ENCODE measurements at regions of chr1 and their contacts with region 1.

Region 1: GRCh38 chr1:151340870-151341754 is 5.9 kb downstream of the RFX5 start:
- DNase-seq: peak; percentile 69
- H3K4me3 Mint-ChIP-seq: no peak overlapping the region
- H3K27ac Mint-ChIP-seq: peak overlapping the region; percentile 23
- H3K4me1 Mint-ChIP-seq: peaks cover 26% of the 10 kb centered on the region
- H3K27me3 Mint-ChIP-seq: no peaks in the 10 kb centered on the region

Region 2: GRCh38 chr1:151130987-151131586 is 210.0 kb before region 1 on chr1:
- CTCF ChIA-PET with region 1: no interaction called
- intact Hi-C with region 1: no loop called
- DNase-seq: peak; percentile 93
- H3K4me3 Mint-ChIP-seq: peak overlapping the region; percentile 75
- H3K27ac Mint-ChIP-seq: peak overlapping the region; percentile 70
- H3K4me1 Mint-ChIP-seq: peaks cover 8% of the 10 kb centered on the region
- H3K27me3 Mint-ChIP-seq: no peaks in the 10 kb centered on the region

Region 3: GRCh38 chr1:151292207-151293030 is 48.7 kb before region 1 on chr1:
- CTCF ChIA-PET with region 1: interaction called, 59 read pairs
- intact Hi-C with region 1: no loop called
- DNase-seq: no peak
- H3K4me3 Mint-ChIP-seq: no peak overlapping the region
- H3K27ac Mint-ChIP-seq: peak overlapping the region; percentile 46
- H3K4me1 Mint-ChIP-seq: peaks cover 13% of the 10 kb centered on the region
- H3K27me3 Mint-ChIP-seq: no peaks in the 10 kb centered on the region

Region 4: GRCh38 chr1:151311589-151312331 is 29.4 kb before region 1 on chr1:
- CTCF ChIA-PET with region 1: interaction called, 68 read pairs
- intact Hi-C with region 1: no loop called
- DNase-seq: peak; percentile 94
- H3K4me3 Mint-ChIP-seq: no peak overlapping the region
- H3K27ac Mint-ChIP-seq: peak overlapping the region; percentile 92
- H3K4me1 Mint-ChIP-seq: peaks cover 37% of the 10 kb centered on the region
- H3K27me3 Mint-ChIP-seq: no peaks in the 10 kb centered on the region

Region 5: DNA sequence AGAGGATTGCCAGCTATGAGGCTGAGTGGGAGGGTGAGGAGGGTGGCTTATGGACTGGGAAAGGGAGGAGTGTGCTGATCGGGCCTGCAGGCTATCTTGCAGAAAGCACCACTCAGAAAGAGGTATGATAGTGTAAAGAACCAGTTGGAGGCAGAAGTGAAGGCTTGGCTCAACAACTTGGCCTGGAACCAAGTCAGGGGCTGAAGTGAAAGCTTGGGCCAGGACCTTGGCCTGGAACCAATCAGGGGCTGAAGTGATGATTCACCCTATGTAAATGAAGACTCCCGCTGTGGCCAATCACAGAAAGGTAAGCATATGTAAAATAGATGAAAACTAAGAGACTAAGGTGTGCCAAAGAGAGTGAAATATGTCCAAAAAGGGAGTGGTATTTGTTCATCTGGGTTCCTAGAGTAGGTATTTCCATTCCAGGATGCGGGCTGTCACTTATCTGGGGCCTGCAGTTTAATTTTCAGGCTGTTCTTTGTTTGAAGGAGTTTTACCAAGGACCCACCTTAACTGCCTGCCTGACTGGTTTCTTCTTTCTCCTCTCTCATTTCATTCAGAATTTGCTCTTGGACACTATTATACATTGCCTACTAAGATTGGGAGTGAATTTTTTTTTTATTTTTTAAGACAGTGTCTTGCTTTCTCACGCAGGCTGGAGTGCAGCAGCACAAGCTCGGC is 11.0 kb after region 1 on chr1:
- CTCF ChIA-PET with region 1: interaction called, 13 read pairs
- intact Hi-C with region 1: no loop called
- DNase-seq: no peak
- H3K4me3 Mint-ChIP-seq: no peak overlapping the region
- H3K27ac Mint-ChIP-seq: no peak overlapping the region
- H3K4me1 Mint-ChIP-seq: peaks cover 10% of the 10 kb centered on the region
- H3K27me3 Mint-ChIP-seq: no peaks in the 10 kb centered on the region

Region 6: GRCh38 chr1:151416231-151416904 is 75.3 kb after region 1 on chr1:
- CTCF ChIA-PET with region 1: no interaction called
- intact Hi-C with region 1: no loop called
- DNase-seq: no peak
- H3K4me3 Mint-ChIP-seq: no peak overlapping the region
- H3K27ac Mint-ChIP-seq: no peak overlapping the region
- H3K4me1 Mint-ChIP-seq: no peaks in the 10 kb centered on the region
- H3K27me3 Mint-ChIP-seq: no peaks in the 10 kb centered on the region

Region 7: DNA sequence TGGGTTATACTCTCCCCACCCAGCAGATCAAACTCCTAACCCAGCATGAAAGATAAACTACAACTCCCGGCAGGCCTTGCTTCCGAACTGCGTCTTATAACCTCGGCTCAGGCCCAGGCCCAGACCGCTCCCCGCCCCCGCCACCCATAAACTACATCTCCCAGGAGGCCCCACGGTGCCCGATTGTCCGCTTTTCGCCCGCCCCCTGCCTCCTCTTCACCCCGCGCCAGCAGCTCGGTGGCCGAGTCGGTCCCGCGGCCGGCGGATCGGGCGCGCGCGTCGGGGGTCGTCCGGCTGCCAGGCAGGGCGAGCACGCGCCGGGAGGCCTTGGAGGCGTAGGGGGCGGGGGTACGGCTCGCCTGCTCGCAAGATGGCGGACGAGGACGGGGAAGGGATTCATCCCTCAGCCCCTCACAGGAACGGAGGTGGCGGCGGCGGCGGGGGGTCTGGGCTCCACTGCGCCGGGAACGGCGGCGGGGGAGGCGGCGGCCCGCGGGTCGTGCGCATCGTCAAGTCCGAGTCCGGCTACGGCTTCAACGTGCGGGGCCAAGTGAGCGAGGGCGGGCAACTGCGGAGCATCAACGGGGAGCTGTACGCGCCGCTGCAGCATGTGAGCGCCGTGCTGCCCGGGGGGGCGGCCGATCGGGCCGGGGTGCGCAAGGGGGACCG is 270.9 kb after region 1 on chr1 and contains the start of gene SNX27:
- CTCF ChIA-PET with region 1: no interaction called
- intact Hi-C with region 1: no loop called
- DNase-seq: peak; percentile 94
- H3K4me3 Mint-ChIP-seq: peak within 1 kb of the TSS; percentile 93
- H3K27ac Mint-ChIP-seq: peak within 1 kb of the TSS; percentile 72
- H3K4me1 Mint-ChIP-seq: peaks cover 48% of the 10 kb centered on the region
- H3K27me3 Mint-ChIP-seq: peaks cover 3% of the 10 kb centered on the region
- total RNA-seq, gene SNX27: 22.9 to 23.6 TPM